Endothelial cell of umbilical vein (primary cell): ENCODE measurements at regions of chr12 and their contacts with region 1.

Region 1: GRCh38 chr12:9049520-9050133 is 60.3 kb downstream of the KLRG1 start:
- DNase-seq: peak; percentile 62
- H3K4me3 ChIP-seq: no peak overlapping the region
- H3K27ac ChIP-seq: no peak overlapping the region
- H3K4me1 ChIP-seq: no peaks in the 10 kb centered on the region
- H3K27me3 ChIP-seq: peaks cover 5 to 13% of the 10 kb centered on the region in 2 experiments
- CTCF ChIP-seq: peak; percentile 13 to 27
- POLR2A ChIP-seq: no peak

Region 2: DNA sequence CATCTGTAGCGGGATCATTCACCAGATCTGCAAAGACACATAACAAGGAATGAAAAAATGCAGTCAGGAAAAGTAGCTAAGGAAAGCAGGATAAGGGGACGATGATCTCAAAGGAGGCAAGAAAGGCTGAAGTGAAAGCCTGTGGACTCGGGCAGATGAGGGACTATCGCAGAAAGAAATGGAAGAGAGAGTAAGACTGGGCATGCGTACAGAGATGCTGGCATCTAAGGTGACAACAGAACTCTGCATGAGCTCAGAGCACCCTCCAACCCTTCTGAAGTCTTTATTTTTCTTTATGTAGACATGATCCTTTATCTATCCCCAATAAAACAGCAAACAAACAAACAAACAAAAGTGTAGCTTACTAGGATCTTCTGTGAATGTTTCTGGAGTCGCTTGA is 394.2 kb before region 1 on chr12:
- CTCF ChIA-PET with region 1: interaction called, 104 read pairs
- POLR2A ChIA-PET with region 1: no interaction called
- dilution Hi-C with region 1: no loop called
- intact Hi-C with region 1: loop called (anchors 2 kb)
- DNase-seq: no peak
- H3K4me3 ChIP-seq: no peak overlapping the region
- H3K27ac ChIP-seq: no peak overlapping the region
- H3K4me1 ChIP-seq: no peaks in the 10 kb centered on the region
- H3K27me3 ChIP-seq: no peaks in the 10 kb centered on the region
- CTCF ChIP-seq: no peak
- POLR2A ChIP-seq: no peak

Region 3: DNA sequence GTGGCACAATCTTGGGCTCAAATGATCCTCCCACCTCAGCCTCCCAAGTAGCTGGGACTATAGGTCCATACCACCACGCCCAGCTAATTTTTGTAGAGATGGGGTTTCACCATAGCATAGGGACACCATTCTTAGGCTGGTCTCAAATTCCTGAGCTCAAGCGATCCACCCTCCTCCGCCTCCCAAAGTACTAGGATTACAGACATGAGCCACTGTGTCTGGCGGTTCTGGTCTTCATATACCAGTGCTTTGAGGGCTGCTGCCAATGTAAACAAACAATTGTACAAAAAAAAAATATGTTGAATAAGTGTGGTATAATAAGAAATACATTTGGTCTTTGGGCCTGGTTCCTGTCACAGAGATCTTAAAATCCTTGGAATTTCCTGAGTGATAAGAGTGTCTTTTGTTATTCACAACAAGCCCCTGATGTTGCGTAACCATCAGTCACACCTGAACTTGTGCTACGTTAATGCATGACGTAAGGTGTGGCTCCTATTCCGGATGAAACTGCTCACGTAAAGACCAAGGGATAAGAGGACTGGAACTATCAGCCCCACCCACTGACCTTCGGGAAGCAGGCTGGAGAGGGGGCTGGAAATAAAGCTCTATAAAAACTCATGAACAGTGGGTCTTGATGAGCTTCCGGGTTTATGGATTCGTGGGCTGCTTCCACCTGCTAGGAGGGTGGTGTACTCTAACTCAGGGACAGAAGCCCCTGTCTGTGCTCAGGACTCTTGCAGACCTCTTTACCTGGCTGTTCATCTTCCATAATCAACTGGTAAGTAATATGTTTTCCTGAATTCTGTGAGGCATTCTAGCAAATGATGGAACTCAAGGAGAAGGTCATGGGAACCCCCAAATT is 368.4 kb before region 1 on chr12:
- CTCF ChIA-PET with region 1: interaction called, 11 read pairs
- POLR2A ChIA-PET with region 1: no interaction called
- dilution Hi-C with region 1: no loop called
- intact Hi-C with region 1: no loop called
- DNase-seq: peak; percentile 91
- H3K4me3 ChIP-seq: peak overlapping the region in 2 of 3 experiments; percentile 3 to 53
- H3K27ac ChIP-seq: peak overlapping the region; percentile 63
- H3K4me1 ChIP-seq: peaks cover 27% of the 10 kb centered on the region
- H3K27me3 ChIP-seq: no peaks in the 10 kb centered on the region
- CTCF ChIP-seq: no peak
- POLR2A ChIP-seq: no peak

Region 4: DNA sequence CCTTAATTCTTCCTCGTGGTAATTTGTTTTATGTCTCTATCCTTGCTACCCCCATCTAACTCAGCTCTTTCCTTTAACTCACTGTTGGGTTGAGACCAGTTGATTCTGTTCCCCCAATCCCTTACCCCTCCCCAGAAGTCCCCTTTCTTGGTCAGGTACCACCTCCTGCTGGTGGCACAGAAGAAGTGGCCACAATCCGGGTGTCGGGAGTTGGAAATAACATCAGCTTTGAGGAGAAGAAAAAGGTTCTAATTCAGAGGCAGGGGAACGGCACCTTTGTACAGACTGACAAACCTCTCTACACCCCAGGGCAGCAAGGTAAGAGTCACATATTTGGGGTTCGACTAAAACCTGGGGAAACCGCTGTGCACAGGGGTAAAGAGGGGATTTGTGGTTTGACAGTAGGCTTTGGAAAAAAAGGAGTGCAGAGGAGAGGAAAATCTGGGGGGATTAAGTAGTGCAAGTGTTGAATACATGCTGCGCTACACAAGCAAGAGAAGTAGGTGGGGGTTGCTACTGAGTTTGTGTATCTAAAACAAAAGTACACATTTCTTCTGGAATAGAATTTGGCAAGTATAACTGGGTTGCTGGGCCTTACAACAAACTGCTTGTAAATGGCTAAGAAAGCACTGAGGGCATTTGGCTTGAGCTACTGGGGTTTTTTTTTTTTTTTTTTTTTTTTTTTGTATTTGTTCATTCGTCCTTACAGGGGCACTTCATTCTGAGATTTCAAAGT is 225.9 kb before region 1 on chr12:
- CTCF ChIA-PET with region 1: no interaction called
- POLR2A ChIA-PET with region 1: no interaction called
- dilution Hi-C with region 1: no loop called
- intact Hi-C with region 1: loop called (anchors 1 kb)
- DNase-seq: peak; percentile 53
- H3K4me3 ChIP-seq: no peak overlapping the region
- H3K27ac ChIP-seq: no peak overlapping the region
- H3K4me1 ChIP-seq: no peaks in the 10 kb centered on the region
- H3K27me3 ChIP-seq: peaks cover 1 to 3% of the 10 kb centered on the region in 2 experiments
- CTCF ChIP-seq: peak; percentile 62 to 65
- POLR2A ChIP-seq: no peak

Region 5: GRCh38 chr12:8914716-8915526 is 134.7 kb before region 1 on chr12:
- CTCF ChIA-PET with region 1: interaction called, 11 read pairs
- POLR2A ChIA-PET with region 1: interaction called, 3 read pairs
- dilution Hi-C with region 1: no loop called
- intact Hi-C with region 1: no loop called
- DNase-seq: peak; percentile 66
- H3K4me3 ChIP-seq: peak overlapping the region; percentile 87 to 92 (median 87)
- H3K27ac ChIP-seq: peak overlapping the region; percentile 34
- H3K4me1 ChIP-seq: peaks cover 18% of the 10 kb centered on the region
- H3K27me3 ChIP-seq: no peaks in the 10 kb centered on the region
- CTCF ChIP-seq: no peak
- POLR2A ChIP-seq: no peak

Region 6: DNA sequence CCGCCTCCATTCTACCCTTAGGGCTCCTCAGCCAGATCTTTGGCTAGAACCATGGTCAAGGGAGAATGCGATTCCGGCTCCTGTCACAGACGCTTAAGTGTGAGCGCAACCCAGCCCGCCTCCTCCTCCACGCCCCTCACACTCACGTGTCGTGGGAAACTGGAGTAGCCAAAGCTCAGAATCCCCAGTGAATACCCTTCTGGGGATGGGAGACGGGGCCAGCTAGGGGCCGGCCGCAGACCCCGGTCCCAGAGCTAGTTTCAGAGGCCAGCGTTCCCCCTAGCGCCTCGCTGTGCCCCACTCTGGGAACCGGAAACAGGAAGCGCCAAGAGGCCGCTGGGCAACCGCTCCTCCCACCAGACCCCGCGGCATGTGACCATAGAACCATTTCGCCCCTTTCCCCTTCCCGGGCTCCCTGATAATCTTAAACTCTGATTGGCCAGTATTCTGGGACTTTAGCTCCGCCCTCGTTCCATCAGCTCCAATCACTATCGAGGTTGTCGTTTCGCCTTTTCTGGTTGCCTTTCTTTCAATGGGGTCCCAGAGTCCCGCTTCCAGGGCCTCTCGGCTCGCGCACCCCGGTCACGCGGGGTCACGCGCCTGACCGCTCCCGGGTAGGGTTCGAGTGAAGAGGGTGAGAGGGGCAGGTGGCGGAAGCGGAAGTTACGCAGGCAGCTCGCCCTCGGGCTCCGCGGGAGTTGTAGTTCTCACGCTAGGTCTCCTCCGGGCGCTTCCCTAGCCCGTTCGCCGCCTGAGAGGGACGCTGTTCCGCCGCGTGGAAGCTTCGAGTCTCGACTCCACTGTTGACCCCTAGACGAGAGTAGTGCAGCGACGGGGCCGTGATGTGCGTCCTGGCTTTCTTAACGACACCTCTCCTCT is 100.0 kb before region 1 on chr12 and contains the start of gene M6PR:
- CTCF ChIA-PET with region 1: interaction called, 37 read pairs
- POLR2A ChIA-PET with region 1: no interaction called
- dilution Hi-C with region 1: no loop called
- intact Hi-C with region 1: no loop called
- DNase-seq: peak; percentile 95
- H3K4me3 ChIP-seq: peak within 1 kb of the TSS; percentile 58 to 96 (median 95)
- H3K27ac ChIP-seq: peak within 1 kb of the TSS; percentile 98
- H3K4me1 ChIP-seq: peaks cover 21% of the 10 kb centered on the region
- H3K27me3 ChIP-seq: no peaks in the 10 kb centered on the region
- CTCF ChIP-seq: peak; percentile 46 to 74
- POLR2A ChIP-seq: peak; percentile 75
- total RNA-seq, gene M6PR: 113 and 142 TPM in 2 replicates

Region 7: GRCh38 chr12:9064201-9064814 is 14.7 kb after region 1 on chr12:
- CTCF ChIA-PET with region 1: interaction called, 23 read pairs
- POLR2A ChIA-PET with region 1: no interaction called
- dilution Hi-C with region 1: no loop called
- intact Hi-C with region 1: no loop called
- DNase-seq: peak; percentile 83
- H3K4me3 ChIP-seq: peak overlapping the region; percentile 69 to 95 (median 76)
- H3K27ac ChIP-seq: peak overlapping the region; percentile 57
- H3K4me1 ChIP-seq: peaks cover 4% of the 10 kb centered on the region
- H3K27me3 ChIP-seq: peaks cover 4 to 6% of the 10 kb centered on the region in 2 experiments
- CTCF ChIP-seq: peak; percentile 32 to 57
- POLR2A ChIP-seq: no peak

Region 8: GRCh38 chr12:9094512-9095206 is 45.0 kb after region 1 on chr12:
- CTCF ChIA-PET with region 1: no interaction called
- POLR2A ChIA-PET with region 1: no interaction called
- dilution Hi-C with region 1: no loop called
- intact Hi-C with region 1: no loop called
- DNase-seq: no peak
- H3K4me3 ChIP-seq: no peak overlapping the region
- H3K27ac ChIP-seq: no peak overlapping the region
- H3K4me1 ChIP-seq: no peaks in the 10 kb centered on the region
- H3K27me3 ChIP-seq: no peaks in the 10 kb centered on the region
- CTCF ChIP-seq: no peak
- POLR2A ChIP-seq: no peak